MCF 10A (cell line): ENCODE measurements at regions of chr11 and their contacts with region 1.

Region 1: DNA sequence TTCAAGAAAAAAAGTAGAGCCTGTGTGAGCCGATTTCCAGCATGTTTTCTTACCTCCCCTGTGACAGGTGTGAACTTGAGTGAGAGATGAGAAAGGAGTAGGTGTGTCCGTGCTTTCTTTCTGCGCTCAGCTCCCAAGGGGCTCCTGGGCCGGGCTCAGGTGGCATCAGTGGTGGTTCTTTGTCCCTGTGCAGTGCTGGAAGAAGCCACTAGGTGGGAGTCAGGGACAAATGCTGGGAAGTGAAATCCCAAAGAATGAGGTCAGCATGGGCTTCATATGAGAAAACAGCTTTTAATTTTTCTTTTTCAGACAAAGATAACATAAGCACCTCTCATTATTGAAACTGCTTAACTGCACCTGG is 57.8 kb downstream of the PPFIBP2 start:
- DNase-seq: peak; percentile 83
- H3K4me3 Mint-ChIP-seq: no peak overlapping the region
- H3K27ac Mint-ChIP-seq: no peak overlapping the region
- H3K4me1 Mint-ChIP-seq: peaks cover 16% of the 10 kb centered on the region
- H3K27me3 Mint-ChIP-seq: no peaks in the 10 kb centered on the region
- CTCF ChIP-seq: peak; percentile 91

Region 2: DNA sequence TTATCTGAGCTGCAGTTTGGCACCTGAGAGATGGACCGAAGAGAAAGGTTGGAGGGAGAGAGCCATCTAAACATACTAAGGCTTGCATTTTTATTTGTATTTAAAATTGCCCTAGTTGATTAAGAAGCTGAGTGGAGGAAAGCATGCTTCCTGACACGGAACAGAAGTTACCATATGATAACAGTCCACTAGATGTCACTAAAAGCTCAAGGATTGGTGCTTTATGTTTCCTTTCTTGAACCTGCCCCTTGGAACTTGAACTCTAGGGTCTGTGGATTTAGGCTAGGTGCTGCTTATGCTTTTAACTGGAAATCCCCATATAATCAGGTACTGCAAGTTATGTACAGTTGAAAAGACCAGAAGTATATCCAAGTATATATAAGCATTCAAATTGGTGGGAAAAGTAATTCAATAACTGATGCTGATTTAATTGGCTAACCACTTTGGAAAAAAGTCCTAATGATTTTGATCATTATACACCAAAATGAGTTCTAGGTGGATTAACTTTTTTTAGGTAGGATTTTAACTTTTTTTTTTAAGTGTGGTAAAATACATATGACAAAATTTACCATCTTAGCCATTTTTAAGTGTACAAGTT is 473.3 kb before region 1 on chr11:
- CTCF ChIA-PET with region 1: interaction called, 6 read pairs
- POLR2A ChIA-PET with region 1: no interaction called
- intact Hi-C with region 1: loop called (anchors 2 kb)
- DNase-seq: peak; percentile 63
- H3K4me3 Mint-ChIP-seq: no peak overlapping the region
- H3K27ac Mint-ChIP-seq: no peak overlapping the region
- H3K4me1 Mint-ChIP-seq: no peaks in the 10 kb centered on the region
- H3K27me3 Mint-ChIP-seq: peaks cover 84% of the 10 kb centered on the region
- CTCF ChIP-seq: peak; percentile 73

Region 3: GRCh38 chr11:7548659-7549274 is 22.9 kb before region 1 on chr11:
- CTCF ChIA-PET with region 1: interaction called, 38 read pairs
- POLR2A ChIA-PET with region 1: interaction called, 3 read pairs
- intact Hi-C with region 1: no loop called
- DNase-seq: peak; percentile 43
- H3K4me3 Mint-ChIP-seq: no peak overlapping the region
- H3K27ac Mint-ChIP-seq: no peak overlapping the region
- H3K4me1 Mint-ChIP-seq: peaks cover 22% of the 10 kb centered on the region
- H3K27me3 Mint-ChIP-seq: no peaks in the 10 kb centered on the region
- CTCF ChIP-seq: no peak

Region 4: GRCh38 chr11:7600205-7600775 is 28.7 kb after region 1 on chr11:
- CTCF ChIA-PET with region 1: interaction called, 24 read pairs
- POLR2A ChIA-PET with region 1: interaction called, 17 read pairs
- intact Hi-C with region 1: no loop called
- DNase-seq: peak; percentile 99
- H3K4me3 Mint-ChIP-seq: peak overlapping the region; percentile 53
- H3K27ac Mint-ChIP-seq: peak overlapping the region; percentile 93
- H3K4me1 Mint-ChIP-seq: peaks cover 35% of the 10 kb centered on the region
- H3K27me3 Mint-ChIP-seq: no peaks in the 10 kb centered on the region
- CTCF ChIP-seq: no peak

Region 5: GRCh38 chr11:7630002-7630401 is 58.4 kb after region 1 on chr11:
- CTCF ChIA-PET with region 1: interaction called, 53 read pairs
- POLR2A ChIA-PET with region 1: no interaction called
- intact Hi-C with region 1: no loop called
- DNase-seq: no peak
- H3K4me3 Mint-ChIP-seq: no peak overlapping the region
- H3K27ac Mint-ChIP-seq: no peak overlapping the region
- H3K4me1 Mint-ChIP-seq: no peaks in the 10 kb centered on the region
- H3K27me3 Mint-ChIP-seq: no peaks in the 10 kb centered on the region
- CTCF ChIP-seq: no peak

Region 6: GRCh38 chr11:7677071-7677470 is 105.5 kb after region 1 on chr11:
- CTCF ChIA-PET with region 1: interaction called, 182 read pairs
- POLR2A ChIA-PET with region 1: no interaction called
- intact Hi-C with region 1: no loop called
- DNase-seq: peak; percentile 95
- H3K4me3 Mint-ChIP-seq: peak overlapping the region; percentile 15
- H3K27ac Mint-ChIP-seq: peak overlapping the region; percentile 50
- H3K4me1 Mint-ChIP-seq: peaks cover 20% of the 10 kb centered on the region
- H3K27me3 Mint-ChIP-seq: no peaks in the 10 kb centered on the region
- CTCF ChIP-seq: no peak

Region 7: GRCh38 chr11:8168485-8169257 is 597.1 kb after region 1 on chr11 and contains the start of gene RIC3:
- CTCF ChIA-PET with region 1: no interaction called
- POLR2A ChIA-PET with region 1: no interaction called
- intact Hi-C with region 1: no loop called
- DNase-seq: no peak
- H3K4me3 Mint-ChIP-seq: no peak within 1 kb of the TSS
- H3K27ac Mint-ChIP-seq: no peak within 1 kb of the TSS
- H3K4me1 Mint-ChIP-seq: no peaks in the 10 kb centered on the region
- H3K27me3 Mint-ChIP-seq: peaks cover 55% of the 10 kb centered on the region
- CTCF ChIP-seq: no peak
- total RNA-seq, gene RIC3: 0.65 and 0.96 TPM in 2 replicates